ENCODE measurements at regions of chr13 and their contacts with region 1.

Region 1: GRCh38 chr13:34886121-34886875 is 55.8 kb upstream of the NBEA start:
- DNase-seq: no peak
- H3K4me3 ChIP-seq: no peak overlapping the region
- H3K27ac ChIP-seq: no peak overlapping the region
- H3K4me1 ChIP-seq: no peaks in the 10 kb centered on the region
- H3K27me3 ChIP-seq: no peaks in the 10 kb centered on the region
- CTCF ChIP-seq: no peak

Region 2: DNA sequence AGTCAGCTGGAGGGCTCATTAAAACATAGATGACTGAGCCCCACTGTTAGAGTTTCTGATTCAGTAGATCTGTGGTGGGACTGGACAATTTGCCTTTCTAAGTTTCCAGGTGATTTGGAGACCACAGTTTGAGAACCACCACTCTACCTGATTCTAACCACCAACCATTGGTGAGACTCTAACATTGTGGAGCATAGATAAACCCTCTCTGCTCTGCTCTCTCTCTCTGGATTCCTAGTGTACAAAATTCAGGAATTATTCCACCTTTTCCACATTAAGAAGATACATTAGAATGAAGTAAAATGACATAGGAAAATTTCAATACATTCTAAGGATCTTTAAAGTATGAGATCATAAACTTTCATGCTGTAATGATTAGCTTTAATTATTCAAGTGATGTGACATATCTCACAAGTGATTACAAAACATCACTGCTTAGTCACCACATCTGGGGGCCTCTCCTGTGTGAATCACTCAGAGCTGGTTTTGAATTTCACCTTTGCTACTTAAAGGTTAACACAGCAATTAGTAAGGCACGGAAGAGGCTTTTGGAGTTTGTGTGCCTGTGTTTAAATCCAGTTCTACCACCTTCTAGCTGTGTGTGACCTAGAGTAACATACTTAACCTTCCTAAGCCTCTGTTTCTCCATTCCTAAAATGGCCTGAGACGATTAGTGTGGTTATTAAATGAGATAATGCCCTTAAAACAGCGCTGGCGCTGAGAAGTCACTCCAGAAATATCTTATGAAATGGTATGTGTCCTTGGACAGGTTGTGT is 22.8 kb before region 1 on chr13:
- CTCF ChIA-PET with region 1: no interaction called
- dilution Hi-C with region 1: no loop called
- in situ Hi-C with region 1: no loop called
- intact Hi-C with region 1: loop called (anchors 1 kb)
- DNase-seq: peak; percentile 88
- H3K4me3 ChIP-seq: no peak overlapping the region
- H3K27ac ChIP-seq: no peak overlapping the region
- H3K4me1 ChIP-seq: peaks cover 12% of the 10 kb centered on the region
- H3K27me3 ChIP-seq: no peaks in the 10 kb centered on the region
- CTCF ChIP-seq: no peak

Measured in mammary epithelial cell (primary cell).